Ascending aorta (tissue), 2 donors: ENCODE measurements at regions of chr19 and their contacts with region 1.

Region 1: DNA sequence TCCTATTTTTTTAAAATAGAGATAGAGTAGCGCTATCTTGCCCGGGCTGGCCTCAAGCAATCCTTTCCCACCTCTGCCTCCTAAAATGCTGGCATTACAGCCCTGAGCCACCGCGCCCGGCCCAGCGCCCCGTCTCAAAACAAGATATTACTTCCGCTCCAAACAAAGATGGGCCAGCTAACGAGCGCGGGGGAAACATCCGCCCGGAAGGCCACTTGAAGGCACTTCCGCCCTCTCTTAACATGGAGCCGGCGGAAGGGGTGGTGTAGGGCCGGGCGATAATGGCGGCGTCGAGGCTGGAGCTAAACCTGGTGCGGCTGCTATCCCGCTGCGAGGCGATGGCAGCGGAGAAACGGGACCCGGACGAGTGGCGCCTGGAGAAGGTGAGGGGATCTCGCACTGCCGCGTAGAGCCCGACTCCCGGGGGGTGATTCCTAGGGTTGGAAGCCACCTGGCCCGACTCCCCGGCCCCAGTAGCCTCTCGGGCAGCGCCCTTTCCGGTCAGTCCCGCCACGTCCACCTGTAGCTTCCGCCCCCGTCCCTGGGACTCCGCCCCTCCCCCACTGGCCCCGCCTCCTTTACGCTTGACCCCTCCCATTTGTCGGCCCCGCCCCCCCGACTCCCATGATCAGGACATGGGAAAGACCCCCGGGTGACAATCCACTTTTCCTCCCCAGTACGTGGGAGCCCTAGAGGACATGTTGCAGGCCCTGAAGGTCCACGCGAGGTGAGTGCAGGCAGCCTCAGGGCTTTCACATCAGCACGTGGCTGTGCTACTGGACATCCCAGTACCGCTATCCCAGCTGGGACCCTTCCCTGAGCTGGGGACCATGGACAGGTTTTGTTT is at the start of gene USE1:
- DNase-seq: peak; percentile 66 to 96
- H3K4me3 ChIP-seq: peak within 1 kb of the TSS; percentile 72 to 74
- H3K27ac ChIP-seq: peak within 1 kb of the TSS; percentile 84 to 88
- H3K4me1 ChIP-seq: peaks cover 0 to 17% of the 10 kb centered on the region in 2 donors
- H3K27me3 ChIP-seq: no peaks in the 10 kb centered on the region
- CTCF ChIP-seq: no peak
- total RNA-seq, gene USE1: 234 TPM

Region 2: DNA sequence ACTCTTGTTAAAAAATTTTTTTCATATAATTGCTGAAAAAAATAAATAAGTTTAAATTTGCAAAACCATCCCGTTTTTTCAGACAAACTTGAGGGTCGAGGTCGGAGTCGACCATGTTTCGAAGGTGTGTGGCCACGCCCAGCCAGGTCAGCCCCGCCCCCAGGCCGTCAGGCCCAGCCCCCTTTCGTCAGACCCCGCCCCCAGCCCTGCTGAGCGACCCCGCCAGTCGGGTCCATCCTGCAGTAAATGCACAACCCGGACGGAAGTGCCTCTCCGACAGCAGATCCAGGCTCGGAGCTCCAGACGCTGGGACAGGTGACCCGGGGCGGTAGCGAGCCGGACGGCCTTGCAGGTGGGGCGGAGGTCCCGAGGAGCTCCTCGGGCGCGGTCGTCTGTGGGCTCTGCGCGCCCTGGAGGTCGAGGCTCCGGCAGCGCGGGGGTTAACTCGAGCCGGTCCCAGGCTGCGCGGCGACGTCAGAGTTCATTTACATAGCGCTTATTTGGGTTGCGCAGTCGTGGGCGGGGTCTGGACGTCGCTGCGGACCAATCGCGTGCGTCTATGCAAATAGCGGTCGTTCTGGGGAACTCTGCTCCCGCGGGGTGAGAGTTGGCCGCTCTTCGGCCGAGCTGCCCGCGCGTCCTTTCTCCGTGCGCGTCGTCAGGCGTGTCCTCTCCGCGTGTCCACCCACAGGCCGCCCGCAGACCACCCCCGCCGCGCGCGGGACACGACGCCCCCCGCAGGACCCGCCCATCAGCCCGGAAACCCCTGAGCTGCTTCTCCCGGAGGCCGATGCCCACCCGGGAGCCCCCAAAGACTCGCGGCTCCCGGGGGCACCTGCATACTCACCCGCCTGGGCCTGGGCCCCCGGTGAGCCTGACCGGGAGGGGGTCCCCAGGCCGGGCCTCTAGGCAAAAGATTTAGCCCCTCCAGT is 10.9 kb after region 1 on chr19 and contains the start of gene OCEL1:
- intact Hi-C with region 1: loop called (anchors 1 kb)
- DNase-seq: peak; percentile 90 to 99
- H3K4me3 ChIP-seq: peak within 1 kb of the TSS; percentile 73 to 80
- H3K27ac ChIP-seq: peak within 1 kb of the TSS; percentile 88 to 92
- H3K4me1 ChIP-seq: peaks cover 0 to 8% of the 10 kb centered on the region in 2 donors
- H3K27me3 ChIP-seq: no peaks in the 10 kb centered on the region
- CTCF ChIP-seq: no peak
- total RNA-seq, gene OCEL1: 13.7 TPM

Region 3: GRCh38 chr19:17266975-17267788 is 51.8 kb after region 1 on chr19 and contains the start of gene BABAM1:
- intact Hi-C with region 1: loop called (anchors 1 kb)
- DNase-seq: peak; percentile 92 to 99
- H3K4me3 ChIP-seq: peak within 1 kb of the TSS; percentile 79 to 96
- H3K27ac ChIP-seq: peak within 1 kb of the TSS; percentile 61 to 83
- H3K4me1 ChIP-seq: peaks cover 5 to 6% of the 10 kb centered on the region in 2 donors
- H3K27me3 ChIP-seq: no peaks in the 10 kb centered on the region
- CTCF ChIP-seq: no peak
- total RNA-seq, gene BABAM1: 85.5 TPM